ENCODE measurements at regions of chr1 and their contacts with region 1.

Region 1: DNA sequence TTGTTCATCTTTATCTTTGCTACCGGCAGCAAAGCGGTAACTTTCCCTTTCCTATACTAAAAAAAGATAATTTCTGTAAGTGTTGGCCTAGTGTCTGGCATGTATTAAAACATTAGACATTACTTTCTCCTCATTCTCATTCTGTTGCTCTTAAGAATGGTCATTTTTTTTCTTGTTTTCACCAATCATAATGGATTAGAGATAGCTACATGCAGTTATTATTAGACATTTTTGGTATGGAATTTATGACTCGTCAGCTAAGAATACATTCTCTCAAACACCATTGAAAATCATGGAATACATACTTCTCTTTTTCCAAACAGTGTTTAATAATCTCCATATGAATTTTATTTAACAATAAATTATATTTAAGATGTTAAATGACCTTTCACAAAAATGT is 1154.6 kb downstream of the BRINP3 start:
- DNase-seq: no peak
- H3K4me3 Mint-ChIP-seq: no peak overlapping the region
- H3K27ac Mint-ChIP-seq: no peak overlapping the region
- H3K4me1 Mint-ChIP-seq: no peaks in the 10 kb centered on the region
- H3K27me3 Mint-ChIP-seq: no peaks in the 10 kb centered on the region

Region 2: DNA sequence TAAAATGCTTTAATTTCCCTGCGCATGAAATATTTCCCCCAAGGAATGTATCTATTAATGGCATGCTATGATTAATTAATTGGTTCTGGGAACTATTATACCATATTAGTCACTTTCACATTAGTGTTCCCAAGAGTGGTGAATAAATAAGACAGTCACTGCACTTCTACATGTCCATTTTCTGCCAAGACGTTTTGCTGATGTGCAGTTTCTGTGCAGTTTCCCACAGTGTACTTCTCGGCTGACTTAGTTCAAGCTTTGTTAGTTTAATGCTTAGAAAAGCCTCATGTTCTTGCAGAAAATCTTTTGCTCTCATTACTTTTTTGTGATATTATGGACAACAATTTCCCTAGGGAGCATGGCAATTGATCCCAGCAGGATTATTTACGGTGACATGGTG is 140.1 kb after region 1 on chr1:
- CTCF ChIA-PET with region 1: no interaction called
- intact Hi-C with region 1: loop called (anchors 5 kb)
- DNase-seq: no peak
- H3K4me3 Mint-ChIP-seq: no peak overlapping the region
- H3K27ac Mint-ChIP-seq: no peak overlapping the region
- H3K4me1 Mint-ChIP-seq: no peaks in the 10 kb centered on the region
- H3K27me3 Mint-ChIP-seq: no peaks in the 10 kb centered on the region

Measured in activated naive CD4-positive, alpha-beta T cell treated with anti-CD3 and anti-CD28 coated beads for 36 hours (primary cell).